Sciatic nerve (tissue), 2 donors: ENCODE measurements at regions of chr14 and their contacts with region 1.

Region 1: DNA sequence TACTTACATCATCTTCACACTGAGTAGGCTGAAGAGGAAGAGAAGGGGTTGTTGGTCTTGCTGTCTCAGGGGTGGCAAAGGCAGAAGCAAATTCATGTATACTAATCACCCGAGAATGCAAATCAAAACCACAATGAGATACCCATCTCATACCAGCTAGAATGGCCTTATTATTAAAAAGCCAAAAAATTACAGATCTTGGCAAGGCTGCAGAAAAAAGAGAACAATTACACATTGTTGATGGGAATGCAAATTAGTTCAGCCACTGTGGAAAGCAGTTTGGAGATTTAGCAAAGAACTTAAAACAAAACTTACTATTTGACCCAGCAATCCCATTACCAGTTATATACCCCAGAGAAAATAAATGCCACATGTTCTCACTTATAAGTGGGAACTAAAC is 154.9 kb downstream of the SEC23A start:
- DNase-seq: no peak
- ATAC-seq: peak; percentile 60

Region 2: GRCh38 chr14:38848243-38848935 is 99.8 kb before region 1 on chr14:
- intact Hi-C with region 1: loop called (anchors 2 kb)
- DNase-seq: no peak
- ATAC-seq: no peak

Region 3: DNA sequence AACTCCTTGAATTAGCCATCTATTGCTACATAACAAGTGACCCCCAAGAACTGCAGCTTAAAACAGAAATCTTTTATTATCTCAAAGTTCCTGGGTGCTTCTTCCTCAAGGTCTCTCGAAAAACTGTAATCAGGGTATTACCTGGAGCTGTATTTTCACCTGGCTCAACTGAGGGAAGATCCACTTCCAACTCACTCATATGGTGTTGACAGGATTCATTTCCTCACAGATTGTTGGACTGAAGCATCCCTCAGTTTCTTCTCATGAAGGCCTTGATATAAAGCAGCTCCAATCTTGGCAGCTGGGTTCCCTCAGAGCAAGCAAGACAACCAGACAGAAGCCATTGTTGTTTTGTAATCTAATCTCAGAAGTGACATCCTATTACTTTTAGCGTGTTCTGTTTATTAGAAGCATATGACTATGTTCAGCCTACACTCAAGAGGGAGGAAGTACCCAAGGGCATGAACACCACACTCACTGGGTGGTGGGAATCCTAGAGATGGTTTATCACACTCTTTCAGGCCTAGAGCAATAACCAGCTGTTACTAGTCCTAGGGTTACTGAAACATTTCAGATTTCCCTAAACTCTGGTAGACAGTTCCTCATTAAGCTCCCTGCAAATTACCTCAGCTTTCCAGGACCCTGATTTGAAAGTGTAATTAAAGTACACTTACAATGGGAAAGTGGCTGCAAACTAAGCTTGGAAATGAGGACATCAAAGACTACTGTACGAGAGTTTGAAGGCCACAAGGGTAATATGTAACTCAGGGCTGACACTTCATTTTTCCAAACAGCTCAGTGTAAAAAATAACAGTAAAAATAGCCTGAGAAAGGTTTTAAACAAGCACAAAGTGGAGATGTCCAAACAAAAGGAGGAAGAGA is 67.3 kb before region 1 on chr14:
- intact Hi-C with region 1: no loop called
- DNase-seq: no peak
- ATAC-seq: no peak